Heart right ventricle (tissue), 16 donors: ENCODE measurements at regions of chr2 and their contacts with region 1.

Region 1: DNA sequence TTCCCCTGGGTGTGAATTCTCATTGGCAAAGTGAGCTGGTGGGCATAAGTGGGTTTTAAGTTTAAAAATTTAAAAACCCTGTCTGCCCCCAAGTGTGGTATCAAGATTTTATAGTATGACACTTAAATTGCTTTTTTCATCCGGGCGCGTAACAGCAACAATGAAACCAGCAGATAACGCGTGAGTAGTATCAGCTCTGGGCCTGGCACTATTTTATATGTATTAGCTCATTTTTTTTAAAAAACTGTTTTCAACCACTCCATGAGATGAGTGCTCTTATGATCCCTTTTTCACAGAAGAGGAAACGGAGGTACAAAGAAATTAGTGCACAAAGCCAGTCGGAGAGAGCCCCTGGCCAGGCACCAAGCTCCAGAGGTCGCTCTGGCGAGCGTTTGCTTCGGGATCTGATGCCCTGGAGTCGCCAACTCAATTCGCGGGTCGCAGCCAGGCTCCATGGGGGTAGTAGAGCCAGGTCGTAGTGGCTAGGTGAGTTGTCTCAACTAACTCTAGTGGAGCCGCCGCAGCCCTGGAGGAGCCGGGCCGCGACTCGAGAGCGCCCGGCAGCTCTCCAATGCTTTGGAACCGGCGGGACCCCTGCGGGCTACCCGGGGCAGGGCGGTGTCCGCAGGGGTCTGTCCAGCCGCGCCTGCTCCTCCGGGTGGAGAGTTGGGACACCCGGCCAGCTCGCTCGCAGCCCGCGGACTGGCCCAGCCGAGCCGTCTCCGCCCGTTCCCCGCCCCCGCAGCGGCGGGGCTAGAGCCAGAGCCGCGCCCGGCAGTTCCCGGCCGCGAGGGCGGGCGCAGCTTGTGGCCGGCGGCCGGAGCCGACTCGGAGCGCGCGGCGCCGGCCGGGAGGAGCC is at the start of gene IL1R1:
- DNase-seq: peak; percentile 80 to 88
- ATAC-seq: peak; percentile 87 to 95 (median 92)
- H3K4me3 ChIP-seq: peak within 1 kb of the TSS; percentile 41 to 87 (median 75)
- H3K27ac ChIP-seq: peak within 1 kb of the TSS; percentile 88 to 98 (median 92)
- H3K4me1 ChIP-seq: peaks cover 0 to 45% (median 15%) of the 10 kb centered on the region in 9 donors
- H3K27me3 ChIP-seq: no peaks in the 10 kb centered on the region
- CTCF ChIP-seq: peak in 1 of 9 donors; percentile 17
- total RNA-seq, gene IL1R1: 5.7 to 47.0 (median 17.6) TPM

Region 2: DNA sequence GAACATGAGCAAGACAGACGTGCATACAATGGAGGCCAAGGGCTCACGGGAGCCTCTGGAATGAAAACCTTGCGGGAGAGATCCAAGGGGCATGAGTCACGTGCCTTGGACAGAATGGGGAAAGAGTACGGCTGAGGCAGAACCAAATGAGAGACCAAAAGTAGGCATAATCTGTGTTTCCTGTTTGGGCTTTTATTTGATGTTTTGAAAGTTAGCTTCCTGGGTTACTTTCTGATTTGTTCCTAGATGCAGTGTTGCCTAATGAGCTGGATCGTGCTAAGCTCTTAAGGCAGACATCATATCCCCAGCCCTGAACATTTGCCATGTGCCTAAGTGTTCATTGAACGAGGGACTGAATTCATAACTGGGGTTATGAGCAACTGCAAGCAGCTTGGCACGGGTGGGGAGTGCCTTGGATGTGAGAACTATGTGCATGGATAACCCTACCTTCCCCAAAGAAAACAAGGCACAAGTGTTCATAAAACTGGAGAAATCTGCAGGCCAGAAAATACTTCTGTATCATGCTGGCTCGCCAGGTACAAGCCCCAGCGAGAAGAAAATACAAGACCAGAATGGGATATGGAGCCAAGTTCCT is 1200.5 kb before region 1 on chr2:
- intact Hi-C with region 1: no loop called
- DNase-seq: no peak
- ATAC-seq: no peak
- H3K4me3 ChIP-seq: no peak overlapping the region
- H3K27ac ChIP-seq: no peak overlapping the region
- H3K4me1 ChIP-seq: peaks cover 0 to 13% (median 6%) of the 10 kb centered on the region in 9 donors
- H3K27me3 ChIP-seq: no peaks in the 10 kb centered on the region
- CTCF ChIP-seq: no peak

Region 3: GRCh38 chr2:101781326-101781725 is 360.9 kb before region 1 on chr2:
- intact Hi-C with region 1: no loop called
- DNase-seq: no peak
- ATAC-seq: peak in 2 of 8 donors; percentile 13 to 28
- H3K4me3 ChIP-seq: no peak overlapping the region
- H3K27ac ChIP-seq: no peak overlapping the region
- H3K4me1 ChIP-seq: peaks cover 5 to 88% (median 55%) of the 10 kb centered on the region in 9 donors
- H3K27me3 ChIP-seq: no peaks in the 10 kb centered on the region
- CTCF ChIP-seq: no peak

Region 4: GRCh38 chr2:102050854-102051391 is 91.3 kb before region 1 on chr2:
- intact Hi-C with region 1: loop called in 1 of 10 experiments (anchors 5 kb)
- DNase-seq: peak; percentile 83 to 93
- ATAC-seq: peak; percentile 83 to 91 (median 86)
- H3K4me3 ChIP-seq: no peak overlapping the region
- H3K27ac ChIP-seq: peak overlapping the region; percentile 38 to 89 (median 67)
- H3K4me1 ChIP-seq: peaks cover 6 to 72% (median 43%) of the 10 kb centered on the region in 9 donors
- H3K27me3 ChIP-seq: peaks cover 0 to 11% (median 0%) of the 10 kb centered on the region in 7 donors
- CTCF ChIP-seq: no peak

Region 5: GRCh38 chr2:102063941-102064678 is 78.1 kb before region 1 on chr2:
- intact Hi-C with region 1: loop called in 1 of 10 experiments (anchors 10 kb)
- DNase-seq: peak; percentile 71 to 83
- ATAC-seq: peak; percentile 79 to 95 (median 90)
- H3K4me3 ChIP-seq: peak overlapping the region in 2 of 10 donors; percentile 12 to 13
- H3K27ac ChIP-seq: peak overlapping the region; percentile 85 to 96 (median 89)
- H3K4me1 ChIP-seq: peaks cover 16 to 82% (median 59%) of the 10 kb centered on the region in 9 donors
- H3K27me3 ChIP-seq: no peaks in the 10 kb centered on the region
- CTCF ChIP-seq: no peak

Region 6: GRCh38 chr2:102070058-102070642 is 72.0 kb before region 1 on chr2:
- intact Hi-C with region 1: loop called in 2 of 10 experiments (anchors 2 to 10 kb)
- DNase-seq: peak; percentile 88 to 93
- ATAC-seq: peak; percentile 95 to 98 (median 97)
- H3K4me3 ChIP-seq: peak overlapping the region in 6 of 10 donors; percentile 1 to 40 (median 18)
- H3K27ac ChIP-seq: peak overlapping the region; percentile 47 to 88 (median 74)
- H3K4me1 ChIP-seq: peaks cover 8 to 47% (median 24%) of the 10 kb centered on the region in 9 donors
- H3K27me3 ChIP-seq: no peaks in the 10 kb centered on the region
- CTCF ChIP-seq: peak in 5 of 9 donors; percentile 16 to 53 (median 41)

Region 7: DNA sequence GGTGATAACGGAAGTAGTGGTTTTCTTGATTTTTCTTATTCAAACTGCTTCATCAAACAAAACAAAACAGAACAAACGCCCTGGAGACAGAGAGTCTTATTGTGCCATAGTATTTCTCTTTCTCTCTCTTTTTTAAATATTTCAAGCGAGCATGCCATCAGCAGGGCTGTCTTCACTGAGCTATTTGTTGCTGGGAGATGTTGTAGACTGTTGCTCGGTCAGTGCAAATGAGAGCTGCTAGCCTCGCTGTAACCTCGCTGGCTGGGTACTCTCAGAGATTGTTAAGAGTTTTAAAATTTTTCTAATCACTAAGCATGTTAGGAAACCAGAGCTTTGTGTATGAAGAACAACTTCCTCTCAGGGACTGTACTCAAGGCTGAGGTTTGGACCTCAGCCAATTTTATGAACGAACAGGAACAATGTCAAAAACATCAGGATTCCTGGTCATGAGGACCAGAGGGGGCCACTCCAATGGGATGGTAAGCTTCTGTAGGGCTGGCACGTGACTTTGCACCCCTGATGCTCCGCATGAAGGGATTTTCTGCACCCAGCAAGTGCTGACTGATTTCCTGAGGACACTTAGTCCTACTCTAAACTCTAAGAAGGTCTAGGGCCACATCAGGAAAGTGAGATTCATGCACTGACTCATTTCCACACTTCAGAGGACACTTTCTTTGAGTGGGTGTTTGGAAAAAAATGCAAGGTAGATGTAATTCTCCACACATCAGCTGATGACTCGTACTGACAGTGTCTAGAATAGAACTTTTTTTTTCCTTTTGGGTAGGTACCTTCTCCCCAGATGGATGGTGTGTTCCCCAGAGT is 59.4 kb before region 1 on chr2:
- intact Hi-C with region 1: loop called in 1 of 10 experiments (anchors 10 kb)
- DNase-seq: peak in 1 of 2 donors; percentile 47
- ATAC-seq: peak; percentile 74 to 94 (median 87)
- H3K4me3 ChIP-seq: peak overlapping the region in 6 of 10 donors; percentile 3 to 21 (median 5)
- H3K27ac ChIP-seq: peak overlapping the region in 9 of 10 donors; percentile 9 to 81 (median 63)
- H3K4me1 ChIP-seq: peaks cover 0 to 30% (median 16%) of the 10 kb centered on the region in 9 donors
- H3K27me3 ChIP-seq: no peaks in the 10 kb centered on the region
- CTCF ChIP-seq: no peak

Region 8: DNA sequence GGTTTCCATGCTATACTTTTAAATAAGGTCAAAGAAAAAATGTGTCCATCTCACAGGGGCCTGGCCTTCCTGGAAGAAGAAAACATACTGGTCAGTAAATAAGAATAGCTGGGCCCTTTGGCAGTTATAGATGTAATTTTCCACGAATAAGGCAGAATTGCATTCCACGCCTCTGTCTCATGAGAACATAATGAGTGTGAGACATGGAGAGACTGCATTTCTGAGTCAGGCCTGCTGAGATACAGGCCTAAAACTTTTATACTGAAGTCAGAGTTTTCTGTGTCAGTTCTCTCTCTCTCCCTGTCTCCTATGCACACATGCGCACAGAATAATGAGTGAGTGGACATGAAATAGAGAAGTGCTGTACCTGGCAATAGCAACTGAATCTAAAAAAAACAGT is 20.1 kb before region 1 on chr2:
- intact Hi-C with region 1: no loop called
- DNase-seq: no peak
- ATAC-seq: peak in 7 of 8 donors; percentile 29 to 83 (median 71)
- H3K4me3 ChIP-seq: no peak overlapping the region
- H3K27ac ChIP-seq: peak overlapping the region in 8 of 10 donors; percentile 22 to 77 (median 58)
- H3K4me1 ChIP-seq: peaks cover 0 to 24% (median 6%) of the 10 kb centered on the region in 9 donors
- H3K27me3 ChIP-seq: no peaks in the 10 kb centered on the region
- CTCF ChIP-seq: no peak